Dorsolateral prefrontal cortex (tissue), 120 donors: ENCODE measurements at regions of chr9 and their contacts with region 1.

Region 1: GRCh38 chr9:132069046-132069898 is 10.4 kb downstream of the MED27 start:
- DNase-seq: no peak
- H3K4me3 ChIP-seq: peak overlapping the region in 5 of 59 donors; percentile 0 to 35 (median 5)
- H3K27ac ChIP-seq: peak overlapping the region; percentile 27 to 91 (median 83)
- H3K27me3 ChIP-seq: no peaks in the 10 kb centered on the region
- CTCF ChIP-seq: no peak

Region 2: GRCh38 chr9:132026932-132027585 is 42.2 kb before region 1 on chr9:
- intact Hi-C with region 1: loop called in 1 of 2 experiments (anchors 5 kb)
- DNase-seq: no peak
- H3K4me3 ChIP-seq: no peak overlapping the region
- H3K27ac ChIP-seq: peak overlapping the region in 2 of 59 donors; percentile 10 to 42
- H3K27me3 ChIP-seq: no peaks in the 10 kb centered on the region
- CTCF ChIP-seq: no peak